Posterior cingulate gyrus (tissue), 11 donors: ENCODE measurements at regions of chr2 and their contacts with region 1.

Region 1: DNA sequence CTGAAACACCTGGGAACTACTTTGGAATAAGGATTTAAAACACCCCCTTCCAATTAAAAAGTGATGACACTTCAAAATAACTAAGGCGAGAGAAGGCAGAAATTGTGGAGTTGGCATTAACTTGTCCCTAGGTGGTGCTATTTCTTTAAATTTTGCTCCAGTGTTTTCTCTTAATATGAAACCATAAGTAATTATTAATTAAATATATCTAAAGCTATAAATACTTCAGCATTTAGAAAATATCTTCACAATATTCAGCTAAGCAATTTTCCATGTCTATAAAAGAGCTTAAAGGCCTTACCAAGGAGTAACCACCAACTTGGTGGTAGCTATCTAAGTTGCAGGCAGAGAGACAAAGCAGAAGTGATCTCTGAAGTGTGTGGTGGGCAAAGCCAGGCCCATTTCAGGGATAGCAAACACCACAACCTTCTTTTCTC is 186.8 kb upstream of the PGAP1 start:
- DNase-seq: no peak

Region 2: DNA sequence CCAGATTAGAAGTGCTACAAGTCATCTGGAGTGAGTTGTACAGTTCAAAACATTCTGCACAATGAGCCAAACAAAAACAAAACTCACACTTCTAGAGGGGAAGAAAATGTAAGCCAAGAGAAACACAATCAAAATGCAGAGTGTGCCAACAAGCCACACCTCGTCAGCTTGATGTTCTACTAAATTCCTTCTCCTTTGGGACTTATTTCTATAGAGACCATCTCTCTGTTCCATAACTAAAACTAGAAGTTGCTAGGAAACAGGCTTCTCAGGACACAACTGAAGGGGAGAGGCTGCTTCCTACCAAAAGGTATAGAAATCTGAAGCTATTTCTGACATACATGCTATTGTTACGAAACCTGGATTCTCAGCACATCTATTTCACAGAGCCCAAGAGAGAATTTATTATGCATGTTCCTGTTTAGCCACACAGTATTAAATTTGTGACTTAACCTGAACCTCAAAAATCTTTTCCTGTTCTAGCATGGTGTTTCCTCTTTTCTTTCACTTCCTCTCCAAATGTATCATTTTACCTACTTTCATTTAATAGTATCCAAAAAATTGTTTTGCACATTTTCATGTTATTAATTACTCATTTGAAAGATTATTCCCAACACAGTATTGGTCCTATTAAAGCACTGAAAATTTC is 685.2 kb before region 1 on chr2:
- intact Hi-C with region 1: no loop called
- DNase-seq: no peak

Region 3: DNA sequence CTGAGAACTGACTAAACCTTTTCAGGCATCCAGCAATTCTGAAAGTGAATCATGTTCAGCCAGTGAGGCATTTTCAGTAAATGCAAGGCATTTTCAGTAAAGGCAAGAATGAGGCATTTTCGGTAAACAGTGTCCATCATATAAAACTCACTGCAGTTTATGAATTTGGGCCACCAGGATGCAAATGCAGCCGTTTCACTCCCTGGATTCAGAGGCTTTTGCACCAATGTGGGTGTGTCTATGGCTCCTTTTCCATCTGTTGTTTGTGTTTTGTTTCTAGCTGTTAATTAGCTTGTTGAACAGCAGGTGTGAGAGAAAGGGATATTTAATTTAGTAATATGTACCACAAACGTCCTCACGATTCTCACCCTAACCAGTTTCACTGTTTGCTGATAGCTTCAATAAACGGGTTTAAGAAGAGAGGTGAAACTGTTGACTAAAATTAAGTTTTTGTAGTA is 70.5 kb before region 1 on chr2:
- intact Hi-C with region 1: no loop called
- DNase-seq: no peak

Region 4: GRCh38 chr2:197168705-197169104 is 55.4 kb after region 1 on chr2:
- intact Hi-C with region 1: loop called (anchors 2 kb)
- DNase-seq: peak in 9 of 10 donors; percentile 44 to 94 (median 76)

Region 5: DNA sequence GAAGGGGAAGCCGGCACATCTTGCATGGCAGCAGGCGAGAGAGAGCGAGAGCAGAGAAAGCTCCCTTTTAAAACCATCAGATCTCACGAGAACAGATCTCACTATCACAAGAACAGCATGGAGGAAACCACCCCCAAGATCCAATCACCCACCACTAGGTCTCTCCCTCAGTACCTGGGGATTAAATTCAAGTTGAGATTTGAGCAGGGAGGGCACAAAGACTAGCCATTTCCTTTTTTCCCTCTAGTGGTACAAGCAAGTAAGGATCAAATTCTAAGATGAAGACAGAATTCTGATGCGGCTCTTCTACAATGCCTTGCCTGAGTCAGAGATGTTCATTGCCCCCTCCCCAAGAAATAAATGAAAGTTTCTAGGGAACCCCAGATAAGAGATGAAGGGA is 242.8 kb after region 1 on chr2:
- intact Hi-C with region 1: no loop called
- DNase-seq: no peak